AG04450 (cell line): ENCODE measurements at regions of chr2 and their contacts with region 1.

Region 1: GRCh38 chr2:167212014-167212648 is 323.9 kb downstream of the XIRP2 start:
- DNase-seq: no peak
- H3K4me3 ChIP-seq: no peak overlapping the region
- H3K27ac ChIP-seq: no peak overlapping the region
- H3K27me3 ChIP-seq: no peaks in the 10 kb centered on the region
- CTCF ChIP-seq: peak; percentile 83

Region 2: GRCh38 chr2:166539340-166540162 is 672.6 kb before region 1 on chr2:
- CTCF ChIA-PET with region 1: interaction called, 25 read pairs
- POLR2A ChIA-PET with region 1: no interaction called
- DNase-seq: peak; percentile 65
- H3K4me3 ChIP-seq: peak overlapping the region; percentile 43
- H3K27ac ChIP-seq: no peak overlapping the region
- H3K27me3 ChIP-seq: no peaks in the 10 kb centered on the region
- CTCF ChIP-seq: peak; percentile 85

Region 3: DNA sequence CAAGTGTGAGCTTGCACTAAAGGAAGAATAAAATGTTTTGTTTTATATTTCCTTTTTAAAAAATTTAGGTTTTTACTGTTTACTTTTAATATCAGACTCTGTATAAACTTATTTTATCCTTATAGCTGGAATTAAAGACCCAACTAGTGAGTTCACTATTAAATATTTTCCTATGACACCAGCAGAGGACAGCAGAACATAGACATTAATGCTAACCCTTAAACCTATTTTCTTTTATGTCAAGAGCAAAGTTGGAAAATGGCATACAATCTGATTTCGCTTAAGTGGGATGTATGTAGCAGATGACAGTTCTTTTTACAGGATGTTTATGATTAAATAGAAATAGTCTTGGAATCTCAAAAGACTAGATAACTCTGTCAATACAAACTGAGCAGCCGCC is 512.1 kb before region 1 on chr2:
- CTCF ChIA-PET with region 1: interaction called, 14 read pairs
- POLR2A ChIA-PET with region 1: no interaction called
- DNase-seq: no peak
- H3K4me3 ChIP-seq: no peak overlapping the region
- H3K27ac ChIP-seq: no peak overlapping the region
- H3K27me3 ChIP-seq: no peaks in the 10 kb centered on the region
- CTCF ChIP-seq: peak; percentile 63

Region 4: DNA sequence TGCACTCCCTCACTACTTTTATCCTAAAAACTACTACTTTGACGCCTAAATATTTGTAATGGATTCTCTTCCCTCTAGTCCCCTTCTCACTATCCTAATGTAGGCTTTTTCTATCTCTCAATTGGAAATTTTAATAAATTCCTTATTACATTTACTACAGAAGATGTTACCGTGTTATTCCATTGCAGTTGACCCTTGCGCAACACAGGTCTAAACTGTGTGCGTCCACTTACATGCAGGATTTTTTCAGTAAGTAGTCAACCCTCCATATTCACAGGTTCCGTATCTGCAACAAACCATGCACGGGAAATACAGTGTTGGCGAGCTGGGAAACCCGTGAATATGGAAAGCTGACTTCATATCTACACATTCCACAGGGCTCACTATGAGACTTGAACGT is 84.0 kb before region 1 on chr2:
- CTCF ChIA-PET with region 1: interaction called, 10 read pairs
- POLR2A ChIA-PET with region 1: no interaction called
- DNase-seq: no peak
- H3K4me3 ChIP-seq: no peak overlapping the region
- H3K27ac ChIP-seq: no peak overlapping the region
- H3K27me3 ChIP-seq: no peaks in the 10 kb centered on the region
- CTCF ChIP-seq: no peak

Region 5: GRCh38 chr2:167177196-167177595 is 34.9 kb before region 1 on chr2:
- CTCF ChIA-PET with region 1: interaction called, 10 read pairs
- POLR2A ChIA-PET with region 1: no interaction called
- DNase-seq: no peak
- H3K4me3 ChIP-seq: no peak overlapping the region
- H3K27ac ChIP-seq: no peak overlapping the region
- H3K27me3 ChIP-seq: no peaks in the 10 kb centered on the region
- CTCF ChIP-seq: no peak

Region 6: DNA sequence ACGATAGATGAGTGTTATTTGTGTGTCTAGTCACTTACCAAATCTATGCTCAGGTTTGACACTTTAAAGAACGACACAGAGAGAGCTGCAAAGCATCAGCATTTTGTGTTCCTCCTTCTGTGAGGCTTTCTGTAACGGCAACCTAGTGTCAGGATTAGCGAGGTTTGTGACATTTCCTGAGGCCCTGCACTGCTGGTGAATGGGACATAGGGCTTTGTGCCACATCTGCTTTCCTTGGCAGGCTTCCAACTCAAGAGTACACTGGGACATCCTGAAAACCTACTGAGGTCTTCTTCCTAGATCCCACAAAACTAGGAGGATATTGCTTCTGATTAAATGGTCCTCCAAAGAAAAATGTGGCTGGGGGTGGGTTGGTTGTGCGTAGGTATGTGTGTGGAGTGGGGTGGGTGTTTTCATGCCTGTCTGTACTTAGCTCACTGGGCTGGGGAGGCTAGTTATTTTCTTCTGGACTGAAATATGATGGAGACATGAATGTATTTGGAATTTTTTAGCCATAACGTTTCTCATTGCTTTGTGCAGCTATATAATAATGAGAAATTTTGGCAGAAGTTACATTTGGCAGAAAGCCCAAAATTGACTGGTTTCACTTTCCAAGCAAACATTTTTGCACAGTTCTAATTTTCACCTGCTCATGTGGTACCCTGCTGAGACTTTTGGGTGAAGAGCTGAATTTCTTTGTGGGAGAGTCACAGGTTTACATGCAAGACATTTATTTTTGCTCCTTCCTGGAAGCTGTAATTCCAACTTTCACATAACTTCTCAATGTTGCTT is 15.5 kb before region 1 on chr2:
- CTCF ChIA-PET with region 1: interaction called, 20 read pairs
- POLR2A ChIA-PET with region 1: no interaction called
- DNase-seq: peak; percentile 27
- H3K4me3 ChIP-seq: no peak overlapping the region
- H3K27ac ChIP-seq: no peak overlapping the region
- H3K27me3 ChIP-seq: no peaks in the 10 kb centered on the region
- CTCF ChIP-seq: no peak

Region 7: GRCh38 chr2:167287212-167287611 is 75.1 kb after region 1 on chr2:
- CTCF ChIA-PET with region 1: no interaction called
- POLR2A ChIA-PET with region 1: no interaction called
- DNase-seq: no peak
- H3K4me3 ChIP-seq: no peak overlapping the region
- H3K27ac ChIP-seq: no peak overlapping the region
- H3K27me3 ChIP-seq: no peaks in the 10 kb centered on the region
- CTCF ChIP-seq: no peak